ENCODE measurements at regions of chr6 and their contacts with region 1.

Region 1: DNA sequence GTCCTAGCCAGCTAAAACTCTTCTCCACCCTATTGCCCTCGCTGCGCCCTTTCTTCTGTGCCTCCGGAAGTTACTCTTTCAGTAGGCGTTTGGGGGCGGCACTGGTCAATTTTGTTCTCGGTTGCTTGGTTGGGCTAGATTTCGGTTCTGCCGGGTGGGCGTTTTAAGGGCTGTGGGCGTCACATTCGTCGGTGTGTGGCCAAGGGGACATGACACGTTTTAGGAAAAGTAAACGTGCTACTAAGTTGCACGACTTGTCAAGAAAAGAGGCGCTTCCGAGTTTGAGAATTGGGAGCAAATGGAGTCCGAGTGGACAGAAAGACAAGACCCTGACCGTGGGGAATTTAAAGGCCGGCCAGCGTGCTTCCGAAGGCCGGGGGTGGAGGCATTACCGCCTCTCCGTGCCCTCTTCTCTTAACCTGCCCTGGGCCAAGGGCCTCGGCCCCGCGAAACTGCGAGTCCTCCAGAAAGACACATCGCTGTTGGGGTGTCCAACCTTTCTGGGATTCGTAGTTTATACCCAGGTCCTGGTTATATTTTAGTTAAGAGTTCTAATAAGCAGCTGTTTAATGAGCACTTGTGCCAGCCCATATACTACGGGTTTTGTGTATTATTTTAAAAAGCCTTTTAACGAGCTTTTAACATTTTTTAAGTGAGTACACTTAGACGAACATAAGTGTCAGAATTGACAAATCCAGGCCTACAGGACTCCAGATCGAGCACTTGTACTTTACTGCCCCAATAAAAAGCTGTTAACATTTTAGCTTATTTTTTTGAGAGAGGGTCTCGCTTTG is 661 bp upstream of the BAG6 start:
- DNase-seq: peak in 1 of 2 experiments; percentile 90
- H3K4me3 ChIP-seq: peak overlapping the region; percentile 97
- H3K4me3 Mint-ChIP-seq: peak overlapping the region; percentile 98
- H3K27ac Mint-ChIP-seq: peak overlapping the region; percentile 99
- H3K4me1 ChIP-seq: peaks cover 36% of the 10 kb centered on the region
- H3K4me1 Mint-ChIP-seq: peaks cover 26% of the 10 kb centered on the region
- H3K27me3 ChIP-seq: no peaks in the 10 kb centered on the region
- H3K27me3 Mint-ChIP-seq: no peaks in the 10 kb centered on the region
- CTCF ChIP-seq: peak in 1 of 2 experiments; percentile 16

Region 2: DNA sequence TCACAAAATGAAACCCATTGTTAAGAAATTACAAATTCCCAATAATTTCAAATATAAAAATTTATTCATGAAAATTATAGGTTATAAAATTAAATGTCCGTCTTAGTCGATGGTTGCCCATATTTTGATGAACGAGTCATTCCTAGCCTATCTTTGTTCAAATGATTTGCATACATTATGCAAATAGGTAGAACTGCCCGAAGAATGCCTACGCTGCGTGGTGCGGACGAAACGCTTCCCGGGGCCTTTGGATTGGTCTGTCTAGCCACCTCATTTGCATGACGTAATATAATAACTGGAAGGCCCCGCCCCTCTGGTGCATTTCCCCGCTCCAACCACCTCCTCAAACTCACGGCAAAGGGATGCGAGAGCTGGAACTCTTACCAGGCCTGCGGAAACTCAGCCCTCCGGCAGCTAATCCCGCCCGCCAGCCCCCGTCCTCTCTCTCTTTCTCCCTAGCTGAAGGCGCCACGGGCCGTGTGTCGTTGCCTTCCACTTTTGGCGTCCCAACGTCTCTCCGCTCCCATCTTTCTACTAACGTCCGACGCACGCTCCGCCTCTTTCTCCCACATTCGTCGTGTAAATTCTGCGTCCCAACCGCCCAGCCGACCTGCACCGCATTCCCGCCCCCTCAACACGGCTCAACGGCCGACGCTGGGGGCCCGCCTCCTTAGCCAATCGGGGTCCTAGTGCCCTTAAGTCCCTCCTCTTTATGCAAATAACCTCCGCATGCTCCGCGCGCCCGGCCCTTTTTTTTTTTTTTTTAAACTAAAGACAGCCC is 33.1 kb before region 1 on chr6:
- CTCF ChIA-PET with region 1: no interaction called
- POLR2A ChIA-PET with region 1: interaction called, 13 read pairs
- intact Hi-C with region 1: loop called (anchors 2 kb)
- DNase-seq: peak; percentile 97 to 98
- H3K4me3 ChIP-seq: peak overlapping the region; percentile 66
- H3K4me3 Mint-ChIP-seq: peak overlapping the region; percentile 83
- H3K27ac Mint-ChIP-seq: peak overlapping the region; percentile 92
- H3K4me1 ChIP-seq: peaks cover 20% of the 10 kb centered on the region
- H3K4me1 Mint-ChIP-seq: peaks cover 19% of the 10 kb centered on the region
- H3K27me3 ChIP-seq: no peaks in the 10 kb centered on the region
- H3K27me3 Mint-ChIP-seq: no peaks in the 10 kb centered on the region
- CTCF ChIP-seq: no peak

Region 3: GRCh38 chr6:31665501-31666336 is 12.6 kb after region 1 on chr6 and contains the start of gene CSNK2B:
- CTCF ChIA-PET with region 1: interaction called, 6 read pairs
- POLR2A ChIA-PET with region 1: interaction called, 25 read pairs
- intact Hi-C with region 1: loop called (anchors 1 kb)
- DNase-seq: peak; percentile 97 to 98
- H3K4me3 ChIP-seq: peak within 1 kb of the TSS; percentile 90
- H3K4me3 Mint-ChIP-seq: peak within 1 kb of the TSS; percentile 86
- H3K27ac Mint-ChIP-seq: peak within 1 kb of the TSS; percentile 96
- H3K4me1 ChIP-seq: peaks cover 17% of the 10 kb centered on the region
- H3K4me1 Mint-ChIP-seq: peaks cover 25% of the 10 kb centered on the region
- H3K27me3 ChIP-seq: no peaks in the 10 kb centered on the region
- H3K27me3 Mint-ChIP-seq: no peaks in the 10 kb centered on the region
- CTCF ChIP-seq: no peak
- total RNA-seq, gene CSNK2B: 219 and 221 TPM in 2 replicates

Region 4: GRCh38 chr6:31712296-31712695 is 59.2 kb after region 1 on chr6:
- CTCF ChIA-PET with region 1: no interaction called
- POLR2A ChIA-PET with region 1: no interaction called
- intact Hi-C with region 1: no loop called
- DNase-seq: no peak
- H3K4me3 ChIP-seq: no peak overlapping the region
- H3K4me3 Mint-ChIP-seq: peak overlapping the region; percentile 34
- H3K27ac Mint-ChIP-seq: peak overlapping the region; percentile 47
- H3K4me1 ChIP-seq: peaks cover 26% of the 10 kb centered on the region
- H3K4me1 Mint-ChIP-seq: peaks cover 32% of the 10 kb centered on the region
- H3K27me3 ChIP-seq: no peaks in the 10 kb centered on the region
- H3K27me3 Mint-ChIP-seq: no peaks in the 10 kb centered on the region
- CTCF ChIP-seq: no peak

Region 5: GRCh38 chr6:31834434-31835198 is 181.5 kb after region 1 on chr6:
- CTCF ChIA-PET with region 1: no interaction called
- POLR2A ChIA-PET with region 1: interaction called, 19 read pairs
- intact Hi-C with region 1: no loop called
- DNase-seq: peak; percentile 90
- H3K4me3 ChIP-seq: peak overlapping the region; percentile 86
- H3K4me3 Mint-ChIP-seq: peak overlapping the region; percentile 96
- H3K27ac Mint-ChIP-seq: peak overlapping the region; percentile 99
- H3K4me1 ChIP-seq: peaks cover 13% of the 10 kb centered on the region
- H3K4me1 Mint-ChIP-seq: peaks cover 18% of the 10 kb centered on the region
- H3K27me3 ChIP-seq: no peaks in the 10 kb centered on the region
- H3K27me3 Mint-ChIP-seq: no peaks in the 10 kb centered on the region
- CTCF ChIP-seq: no peak

Measured in Caco-2 (cell line).